ENCODE measurements at regions of chr15 and their contacts with region 1.

Region 1: DNA sequence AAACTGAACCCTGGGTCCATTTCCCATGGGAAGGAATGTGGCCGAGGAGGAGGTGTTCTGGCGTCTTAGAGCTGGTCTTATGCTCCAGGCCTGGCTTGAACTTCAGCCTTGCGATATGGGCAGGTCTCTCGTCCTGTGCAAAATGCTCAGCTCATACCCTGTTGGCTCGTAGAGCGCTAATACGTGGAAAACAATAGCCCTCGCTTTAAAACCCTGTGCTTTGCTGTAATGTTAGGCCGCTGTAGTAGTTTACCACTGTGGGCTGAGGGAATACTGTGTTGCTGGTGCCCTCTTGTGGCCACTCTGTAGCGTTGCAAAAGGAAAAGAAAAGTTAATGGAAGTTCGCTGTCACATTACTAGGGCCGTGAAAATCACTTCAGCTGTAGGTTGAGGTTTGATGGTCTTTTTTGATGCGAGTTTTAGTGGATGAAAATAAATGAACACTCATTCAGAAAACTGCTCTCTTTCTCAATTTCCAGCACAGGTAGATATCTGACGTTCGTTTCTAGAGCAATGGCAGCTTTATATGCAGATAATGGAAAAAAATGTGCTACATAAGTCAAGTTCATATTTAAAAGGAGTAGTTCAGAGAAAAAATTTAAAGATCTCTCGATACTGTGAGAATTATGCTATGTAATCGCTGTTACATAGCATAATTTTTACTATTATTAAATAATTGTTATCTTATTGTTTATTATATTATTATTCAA is 92.9 kb downstream of the MCTP2 start:
- DNase-seq: peak; percentile 86
- H3K4me3 Mint-ChIP-seq: peak overlapping the region; percentile 28
- H3K27ac Mint-ChIP-seq: no peak overlapping the region
- H3K4me1 Mint-ChIP-seq: peaks cover 25% of the 10 kb centered on the region
- H3K27me3 Mint-ChIP-seq: no peaks in the 10 kb centered on the region

Region 2: GRCh38 chr15:93982226-93982727 is 342.0 kb before region 1 on chr15:
- intact Hi-C with region 1: no loop called
- DNase-seq: peak; percentile 40
- H3K4me3 Mint-ChIP-seq: no peak overlapping the region
- H3K27ac Mint-ChIP-seq: no peak overlapping the region
- H3K4me1 Mint-ChIP-seq: peaks cover 5% of the 10 kb centered on the region
- H3K27me3 Mint-ChIP-seq: peaks cover 10% of the 10 kb centered on the region

Region 3: DNA sequence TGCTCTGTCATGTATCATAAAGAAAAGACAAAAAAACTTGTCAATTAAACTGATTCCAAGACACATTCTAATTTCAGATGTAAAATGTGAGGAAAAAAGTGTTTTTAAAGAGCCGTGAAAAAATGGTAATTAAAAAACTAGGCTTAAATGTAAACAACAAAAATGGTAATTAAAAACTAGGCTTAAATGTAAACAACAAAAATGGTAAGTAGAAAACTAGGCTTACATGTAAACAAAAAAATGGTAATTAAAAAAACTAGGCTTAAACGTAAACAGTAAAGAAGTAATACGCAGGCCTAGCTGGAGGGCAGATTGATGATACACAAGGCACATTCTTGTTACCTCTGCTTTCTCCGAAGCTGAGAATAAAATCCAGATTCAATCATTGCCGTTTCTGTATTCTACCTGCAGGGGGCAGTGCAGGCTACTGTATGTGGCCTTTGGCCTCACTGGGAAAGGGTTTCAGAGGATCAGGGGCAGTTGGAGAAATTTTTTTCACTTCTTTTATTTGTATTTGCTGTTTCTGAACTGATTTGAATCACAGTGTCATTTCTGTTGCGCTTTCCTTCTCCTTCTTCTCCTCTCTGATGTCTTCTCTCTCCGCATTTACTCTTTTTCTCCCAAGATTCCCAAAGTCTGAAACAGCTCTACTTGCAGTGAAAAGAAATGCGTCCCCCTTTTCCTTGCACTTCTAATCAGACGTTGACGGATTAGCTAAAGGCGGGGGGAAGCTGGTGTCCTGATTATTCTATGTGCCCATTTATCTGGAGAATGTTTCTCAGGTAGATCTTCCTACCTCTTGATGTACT is 160.1 kb before region 1 on chr15:
- intact Hi-C with region 1: loop called (anchors 1 kb)
- DNase-seq: peak; percentile 90
- H3K4me3 Mint-ChIP-seq: no peak overlapping the region
- H3K27ac Mint-ChIP-seq: no peak overlapping the region
- H3K4me1 Mint-ChIP-seq: peaks cover 5% of the 10 kb centered on the region
- H3K27me3 Mint-ChIP-seq: peaks cover 28% of the 10 kb centered on the region